ENCODE measurements at regions of chr12 and their contacts with region 1.

Region 1: GRCh38 chr12:92649511-92650227 is 53.1 kb upstream of the PLEKHG7 start:
- DNase-seq: no peak
- ATAC-seq: peak; percentile 92

Region 2: DNA sequence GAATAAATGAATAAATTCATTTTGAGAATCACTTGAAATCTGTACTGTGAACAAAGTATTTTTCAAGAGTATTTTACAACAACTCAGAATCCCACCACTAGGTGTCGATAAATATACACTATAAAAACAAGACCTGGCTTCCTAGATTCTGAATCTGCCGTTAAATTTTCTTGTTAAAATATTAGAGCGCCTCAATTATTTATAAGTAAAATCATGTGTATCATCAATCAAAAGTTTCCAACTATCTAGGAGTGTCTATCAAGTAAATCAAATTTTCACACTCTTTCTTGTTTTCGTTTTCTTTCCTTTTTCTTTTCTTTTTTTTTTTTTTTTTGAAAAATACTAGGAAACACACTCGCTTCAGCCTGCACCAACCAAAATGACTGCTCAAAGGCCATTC is 1287.8 kb before region 1 on chr12:
- intact Hi-C with region 1: loop called (anchors 5 kb)
- DNase-seq: no peak
- ATAC-seq: peak; percentile 33

Region 3: DNA sequence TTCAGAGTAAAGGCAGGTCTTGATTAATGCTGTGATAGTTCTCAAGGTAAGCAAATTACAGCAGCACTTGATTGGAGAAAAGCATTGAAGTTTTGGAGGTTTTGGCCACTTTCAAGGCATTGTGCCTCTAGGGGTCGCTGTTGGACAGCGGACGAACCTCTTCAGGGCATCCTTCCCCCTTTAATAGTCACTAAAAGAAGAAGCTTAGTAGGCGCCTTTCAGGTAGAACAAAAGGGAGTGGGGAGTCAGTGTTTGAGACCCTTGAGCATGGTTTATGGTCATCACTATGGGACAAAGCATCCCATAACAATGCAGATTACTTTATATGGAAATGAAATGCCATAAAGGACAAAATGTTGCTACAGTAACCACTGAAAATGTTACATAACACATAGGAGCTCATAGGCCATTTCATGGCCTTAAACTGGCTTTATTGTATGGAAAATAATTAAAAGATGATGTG is 1267.6 kb before region 1 on chr12:
- intact Hi-C with region 1: loop called (anchors 5 kb)
- DNase-seq: peak; percentile 87
- ATAC-seq: peak; percentile 90

Region 4: DNA sequence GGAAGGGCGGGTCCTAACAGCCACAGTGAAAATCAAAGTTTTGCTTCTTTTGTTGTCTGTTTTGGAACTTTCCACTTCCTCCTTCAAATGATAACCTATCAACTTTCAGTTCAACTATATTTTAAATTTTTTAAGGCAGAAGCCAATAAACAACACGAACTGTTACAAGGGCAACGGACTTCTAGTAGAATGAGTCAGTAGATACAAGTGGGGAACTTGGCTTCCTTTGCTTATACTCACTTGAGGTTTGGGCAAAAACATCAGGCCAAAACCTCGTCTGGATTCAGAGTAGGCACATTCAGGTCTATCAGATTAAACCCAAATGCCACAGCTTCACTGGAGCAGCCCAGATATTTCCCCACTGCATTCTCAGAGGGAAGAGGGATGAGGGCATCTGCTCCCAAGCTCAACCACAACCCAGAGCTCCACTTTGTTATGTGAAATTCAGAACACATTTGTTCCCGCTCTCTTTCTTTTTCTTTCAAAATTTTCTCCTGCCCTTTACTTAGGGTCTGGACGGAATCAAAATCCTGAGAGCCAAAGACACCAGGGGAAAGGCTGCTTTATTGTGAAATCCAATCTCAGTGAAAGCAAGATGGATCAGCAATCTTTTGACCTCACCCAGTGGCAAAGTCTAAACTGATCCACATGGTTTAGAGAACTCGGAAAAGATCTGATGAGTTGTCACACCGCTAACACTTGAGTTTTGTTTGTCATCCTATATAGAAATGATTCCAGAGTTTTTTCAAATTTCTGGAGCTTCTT is 351.6 kb before region 1 on chr12:
- intact Hi-C with region 1: no loop called
- DNase-seq: no peak
- ATAC-seq: peak; percentile 90

Measured in left ventricle myocardium superior (tissue), 1 donor.